Heart right ventricle (tissue), 16 donors: ENCODE measurements at regions of chr20 and their contacts with region 1.

Region 1: DNA sequence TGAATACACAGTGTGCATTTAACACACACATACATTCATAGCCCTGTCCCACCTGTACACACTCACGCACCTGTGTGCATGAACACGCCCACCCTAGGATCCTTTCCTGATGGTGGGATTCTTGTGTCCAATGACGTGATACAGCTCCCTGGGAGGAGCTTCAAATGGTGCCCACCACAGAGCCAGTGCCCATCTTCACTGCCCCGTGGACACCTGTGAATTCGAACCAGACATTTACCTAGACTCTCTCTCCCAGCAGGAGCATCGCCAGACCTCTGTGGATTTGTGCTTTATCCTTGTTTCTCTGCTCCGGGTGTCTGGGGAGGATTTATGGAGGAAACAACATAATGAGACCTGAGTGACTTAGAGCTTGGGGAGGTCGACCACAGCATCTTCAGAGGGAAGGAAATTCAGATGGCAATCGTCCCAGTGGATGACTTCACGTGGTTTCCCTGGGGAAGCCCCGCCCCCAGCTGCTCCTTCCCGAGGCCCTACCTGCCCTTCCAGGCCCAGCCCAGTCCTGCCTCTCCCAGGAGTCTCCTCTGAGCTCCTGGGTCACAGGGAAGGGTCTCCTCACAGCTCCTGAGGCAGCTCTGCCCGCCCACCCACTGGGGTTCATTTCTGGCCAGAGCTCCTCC is 430.1 kb upstream of the SULF2 start:
- DNase-seq: no peak
- ATAC-seq: peak in 1 of 8 donors; percentile 18
- H3K4me3 ChIP-seq: no peak overlapping the region
- H3K27ac ChIP-seq: no peak overlapping the region
- H3K4me1 ChIP-seq: no peaks in the 10 kb centered on the region
- H3K27me3 ChIP-seq: peaks cover 0 to 6% (median 0%) of the 10 kb centered on the region in 7 donors
- CTCF ChIP-seq: no peak

Region 2: GRCh38 chr20:48597405-48598302 is 382.2 kb after region 1 on chr20:
- intact Hi-C with region 1: loop called in 1 of 10 experiments (anchors 2 kb)
- DNase-seq: no peak
- ATAC-seq: peak in 1 of 8 donors; percentile 25
- H3K4me3 ChIP-seq: no peak overlapping the region
- H3K27ac ChIP-seq: no peak overlapping the region
- H3K4me1 ChIP-seq: no peaks in the 10 kb centered on the region
- H3K27me3 ChIP-seq: no peaks in the 10 kb centered on the region
- CTCF ChIP-seq: no peak